Esophagus muscularis mucosa (tissue), 4 donors: ENCODE measurements at regions of chr7 and their contacts with region 1.

Region 1: GRCh38 chr7:129218514-129219062 is 6.2 kb upstream of the AHCYL2 start:
- DNase-seq: no peak
- H3K4me3 ChIP-seq: no peak overlapping the region
- H3K27ac ChIP-seq: no peak overlapping the region
- H3K4me1 ChIP-seq: peaks cover 0 to 8% (median 7%) of the 10 kb centered on the region in 4 donors
- H3K27me3 ChIP-seq: peaks cover 0 to 5% (median 0%) of the 10 kb centered on the region in 4 donors
- CTCF ChIP-seq: peak; percentile 89 to 90 (median 89)
- EP300 ChIP-seq: no peak
- POLR2A ChIP-seq: no peak

Region 2: DNA sequence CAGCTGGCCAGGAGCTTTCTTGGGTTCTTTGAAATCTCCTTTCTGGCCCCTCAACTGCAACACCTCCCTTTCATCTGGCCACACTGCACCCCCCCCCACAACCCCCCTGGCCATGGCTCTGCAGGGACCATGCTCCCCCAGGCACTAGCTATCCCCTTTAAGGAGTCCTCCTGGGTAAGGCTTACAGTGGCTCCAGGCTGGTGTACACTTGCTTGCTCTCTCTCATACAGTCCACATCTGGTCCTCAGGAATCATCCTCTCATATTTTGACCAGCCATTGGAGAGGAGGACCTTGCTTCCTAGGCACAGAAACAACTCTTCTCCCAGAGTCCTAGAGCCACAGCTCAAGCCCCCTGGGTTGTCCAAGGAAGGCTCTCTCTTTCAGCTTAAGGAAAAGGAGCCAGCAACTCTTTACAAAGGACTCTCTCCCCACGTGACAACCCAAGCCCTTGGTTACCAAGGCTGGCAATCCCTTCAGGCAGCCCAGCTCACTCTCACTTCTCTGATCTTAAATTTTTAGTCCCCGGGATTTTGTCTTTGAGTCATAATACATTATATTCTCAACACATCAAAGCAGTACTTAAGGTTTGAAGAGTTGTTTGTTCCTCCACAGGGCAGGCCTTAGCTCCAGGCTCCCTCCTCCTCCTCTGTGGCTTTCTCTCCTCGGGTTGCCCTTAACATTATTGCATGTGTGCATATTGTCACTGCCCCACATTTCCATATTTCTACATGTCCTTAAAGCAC is 536.6 kb before region 1 on chr7:
- intact Hi-C with region 1: no loop called
- DNase-seq: no peak
- H3K4me3 ChIP-seq: no peak overlapping the region
- H3K27ac ChIP-seq: no peak overlapping the region
- H3K4me1 ChIP-seq: no peaks in the 10 kb centered on the region
- H3K27me3 ChIP-seq: no peaks in the 10 kb centered on the region
- CTCF ChIP-seq: no peak
- EP300 ChIP-seq: no peak
- POLR2A ChIP-seq: no peak

Region 3: DNA sequence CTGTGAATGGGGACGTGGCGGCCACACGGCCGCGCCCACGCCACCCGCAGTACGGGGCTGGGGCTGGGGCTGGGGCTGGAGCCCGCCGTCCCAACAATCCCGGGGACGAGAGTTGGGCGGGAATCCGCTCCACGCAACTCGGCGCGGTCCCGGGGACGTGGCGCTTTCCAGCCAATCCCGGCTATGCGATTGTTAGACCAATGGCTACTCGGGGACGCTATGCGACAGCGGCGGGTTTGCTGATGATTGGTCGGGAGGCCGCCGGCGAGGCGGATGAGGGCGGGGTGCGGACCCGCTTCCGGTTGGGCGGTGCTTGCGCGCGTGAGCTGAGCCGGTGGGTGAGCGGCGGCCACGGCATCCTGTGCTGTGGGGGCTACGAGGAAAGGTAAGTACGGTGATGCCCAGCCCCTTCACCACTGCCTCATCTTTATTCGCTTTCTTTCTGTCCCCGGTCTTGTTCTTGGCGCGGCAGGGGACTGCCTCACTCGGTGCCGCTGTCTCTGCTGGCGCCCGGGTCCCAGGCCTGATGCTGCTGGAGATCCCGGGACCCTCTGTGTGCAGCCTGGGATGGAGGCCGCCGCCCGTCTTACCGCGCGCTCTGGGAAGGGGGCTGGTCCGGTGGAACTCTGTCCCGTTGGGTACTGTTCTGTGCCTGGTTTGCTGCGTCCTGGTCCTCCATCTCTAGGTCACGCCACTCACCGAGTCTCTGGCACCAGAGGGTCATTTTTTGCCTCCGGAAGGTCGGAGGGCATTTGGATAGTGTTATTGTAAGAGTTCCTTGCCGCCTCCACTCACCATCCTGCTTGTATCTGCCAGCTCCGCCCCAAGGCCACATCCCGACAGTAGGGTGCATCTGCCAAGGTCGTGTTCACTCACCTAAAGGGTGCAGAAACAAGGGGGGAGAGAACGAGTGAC is 479.3 kb before region 1 on chr7 and contains the start of gene CALU:
- intact Hi-C with region 1: no loop called
- DNase-seq: peak; percentile 99
- H3K4me3 ChIP-seq: peak within 1 kb of the TSS; percentile 78 to 97 (median 88)
- H3K27ac ChIP-seq: peak within 1 kb of the TSS; percentile 91 to 99 (median 94)
- H3K4me1 ChIP-seq: peaks cover 34 to 55% (median 54%) of the 10 kb centered on the region in 4 donors
- H3K27me3 ChIP-seq: no peaks in the 10 kb centered on the region
- CTCF ChIP-seq: peak in 1 of 3 experiments; percentile 12
- EP300 ChIP-seq: no peak
- POLR2A ChIP-seq: peak; percentile 96
- total RNA-seq, gene CALU: 188 to 269 (median 199) TPM

Region 4: DNA sequence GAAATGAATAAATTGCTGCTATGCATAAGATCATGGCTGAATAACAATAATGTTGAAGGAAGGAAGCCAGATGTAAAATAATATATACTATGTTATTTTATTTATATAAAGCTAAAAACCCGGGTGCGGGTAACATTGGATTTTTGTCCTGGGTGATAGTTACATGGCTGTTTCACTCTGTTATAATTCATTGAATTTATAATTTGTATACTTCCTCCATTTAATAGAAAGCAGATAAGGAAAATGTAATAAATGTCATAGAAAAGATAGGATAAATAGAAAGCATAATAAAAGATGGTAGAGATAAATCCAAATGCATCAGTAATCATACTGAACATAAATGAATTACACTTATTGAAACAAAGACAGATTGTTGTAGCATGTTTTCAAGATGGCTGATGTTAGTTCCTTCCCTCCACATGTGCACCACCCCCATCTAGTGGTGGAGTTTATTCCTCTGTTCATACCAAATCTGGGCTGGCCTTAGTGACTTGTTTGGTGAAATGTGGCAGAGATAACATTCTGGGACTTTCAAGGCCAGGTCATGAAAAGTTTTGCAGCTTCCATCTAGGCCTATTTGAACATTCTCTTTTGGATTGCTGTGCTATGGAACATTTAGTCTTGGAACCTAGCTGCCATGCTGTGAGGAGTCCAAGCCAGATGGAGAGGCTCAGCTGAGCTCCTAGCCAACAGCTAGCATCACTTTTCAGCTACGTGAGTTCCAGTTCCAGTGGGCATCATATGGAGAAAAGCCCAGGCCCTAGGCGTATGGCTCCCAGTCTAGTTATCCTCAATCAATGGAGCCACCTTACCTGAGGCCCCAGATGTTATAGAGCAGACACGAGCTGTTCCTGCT is 53.1 kb after region 1 on chr7:
- intact Hi-C with region 1: loop called (anchors 1 kb)
- DNase-seq: no peak
- H3K4me3 ChIP-seq: no peak overlapping the region
- H3K27ac ChIP-seq: no peak overlapping the region
- H3K4me1 ChIP-seq: no peaks in the 10 kb centered on the region
- H3K27me3 ChIP-seq: no peaks in the 10 kb centered on the region
- CTCF ChIP-seq: peak; percentile 57 to 70 (median 59)
- EP300 ChIP-seq: no peak
- POLR2A ChIP-seq: no peak

Region 5: GRCh38 chr7:129298268-129298893 is 79.8 kb after region 1 on chr7:
- intact Hi-C with region 1: loop called (anchors 2 kb)
- DNase-seq: no peak
- H3K4me3 ChIP-seq: no peak overlapping the region
- H3K27ac ChIP-seq: no peak overlapping the region
- H3K4me1 ChIP-seq: peaks cover 0 to 11% (median 0%) of the 10 kb centered on the region in 4 donors
- H3K27me3 ChIP-seq: no peaks in the 10 kb centered on the region
- CTCF ChIP-seq: peak; percentile 51 to 75 (median 64)
- EP300 ChIP-seq: no peak
- POLR2A ChIP-seq: no peak

Region 6: GRCh38 chr7:129875745-129876411 is 657.3 kb after region 1 on chr7:
- intact Hi-C with region 1: no loop called
- DNase-seq: no peak
- H3K4me3 ChIP-seq: peak overlapping the region in 3 of 4 donors; percentile 18 to 30 (median 21)
- H3K27ac ChIP-seq: peak overlapping the region; percentile 47 to 66 (median 56)
- H3K4me1 ChIP-seq: peaks cover 44 to 52% (median 51%) of the 10 kb centered on the region in 4 donors
- H3K27me3 ChIP-seq: no peaks in the 10 kb centered on the region
- CTCF ChIP-seq: no peak
- EP300 ChIP-seq: no peak
- POLR2A ChIP-seq: no peak

Region 7: GRCh38 chr7:130270947-130271795 is 1052.6 kb after region 1 on chr7:
- intact Hi-C with region 1: no loop called
- DNase-seq: no peak
- H3K4me3 ChIP-seq: no peak overlapping the region
- H3K27ac ChIP-seq: no peak overlapping the region
- H3K4me1 ChIP-seq: peaks cover 0 to 24% (median 20%) of the 10 kb centered on the region in 4 donors
- H3K27me3 ChIP-seq: no peaks in the 10 kb centered on the region
- CTCF ChIP-seq: no peak
- EP300 ChIP-seq: no peak
- POLR2A ChIP-seq: no peak